Endothelial cell of umbilical vein (primary cell): ENCODE measurements at regions of chr16 and their contacts with region 1.

Region 1: GRCh38 chr16:67672739-67673662 is 6.4 kb downstream of the C16orf86 start:
- DNase-seq: peak; percentile 79
- H3K4me3 ChIP-seq: no peak overlapping the region
- H3K27ac ChIP-seq: peak overlapping the region; percentile 73
- H3K4me1 ChIP-seq: peaks cover 26% of the 10 kb centered on the region
- H3K27me3 ChIP-seq: no peaks in the 10 kb centered on the region
- CTCF ChIP-seq: peak; percentile 80 to 82
- POLR2A ChIP-seq: peak; percentile 22

Region 2: GRCh38 chr16:67719048-67719777 is 46.2 kb after region 1 on chr16 and contains the start of gene GFOD2:
- CTCF ChIA-PET with region 1: interaction called, 28 read pairs
- POLR2A ChIA-PET with region 1: interaction called, 4 read pairs
- dilution Hi-C with region 1: no loop called
- intact Hi-C with region 1: loop called (anchors 1 kb)
- DNase-seq: peak; percentile 98
- H3K4me3 ChIP-seq: peak within 1 kb of the TSS; percentile 78 to 93 (median 91)
- H3K27ac ChIP-seq: peak within 1 kb of the TSS; percentile 81
- H3K4me1 ChIP-seq: peaks cover 23% of the 10 kb centered on the region
- H3K27me3 ChIP-seq: no peaks in the 10 kb centered on the region
- CTCF ChIP-seq: no peak
- POLR2A ChIP-seq: peak; percentile 97
- total RNA-seq, gene GFOD2: 43.7 and 47.5 TPM in 2 replicates

Region 3: GRCh38 chr16:67841764-67842508 is 168.9 kb after region 1 on chr16 and contains the start of gene THAP11:
- CTCF ChIA-PET with region 1: interaction called, 11 read pairs
- POLR2A ChIA-PET with region 1: no interaction called
- dilution Hi-C with region 1: no loop called
- intact Hi-C with region 1: loop called (anchors 2 kb)
- DNase-seq: peak; percentile 95
- H3K4me3 ChIP-seq: peak within 1 kb of the TSS; percentile 32 to 58 (median 57)
- H3K27ac ChIP-seq: peak within 1 kb of the TSS; percentile 77
- H3K4me1 ChIP-seq: peaks cover 26% of the 10 kb centered on the region
- H3K27me3 ChIP-seq: no peaks in the 10 kb centered on the region
- CTCF ChIP-seq: peak; percentile 82 to 93
- POLR2A ChIP-seq: peak; percentile 44
- total RNA-seq, gene THAP11: 22.6 and 24.0 TPM in 2 replicates

Region 4: DNA sequence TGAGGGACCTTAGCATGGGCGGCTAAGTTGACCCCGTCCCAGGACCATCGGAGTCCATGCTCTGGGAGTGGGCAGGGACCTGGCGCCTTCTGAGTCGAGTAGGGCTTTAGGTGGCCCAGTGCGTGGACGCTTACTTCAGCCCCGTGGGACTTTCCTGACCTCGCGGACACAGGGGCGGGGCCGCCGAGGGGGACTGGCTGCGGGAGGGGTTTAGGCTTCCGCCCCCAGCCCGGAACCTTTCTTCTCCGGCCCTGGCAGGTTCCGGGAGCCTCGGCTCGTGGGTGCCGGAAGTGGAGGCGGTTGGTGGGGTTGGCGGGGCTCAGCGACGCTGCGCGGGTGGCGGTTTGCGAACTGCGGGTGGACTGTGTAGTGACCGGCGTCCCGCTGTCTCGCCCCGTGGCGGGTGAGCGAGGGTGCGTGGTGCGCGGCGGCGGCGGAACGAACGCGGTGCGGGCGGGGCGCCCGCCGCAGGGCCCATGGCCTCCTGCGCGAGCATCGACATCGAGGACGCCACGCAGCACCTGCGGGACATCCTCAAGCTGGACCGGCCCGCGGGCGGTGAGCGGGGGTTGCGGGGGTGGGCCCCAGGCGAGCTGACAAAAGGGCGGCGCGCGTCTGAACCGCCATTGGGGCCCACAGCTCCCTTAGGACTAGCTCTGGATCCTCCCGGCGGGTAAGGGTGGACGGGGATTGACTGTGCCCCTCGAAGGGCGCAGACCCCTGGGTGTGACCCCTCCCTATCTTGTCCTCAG is 200.0 kb after region 1 on chr16 and contains the start of gene EDC4:
- CTCF ChIA-PET with region 1: interaction called, 10 read pairs
- POLR2A ChIA-PET with region 1: no interaction called
- dilution Hi-C with region 1: no loop called
- intact Hi-C with region 1: loop called (anchors 2 kb)
- DNase-seq: peak; percentile 78
- H3K4me3 ChIP-seq: peak within 1 kb of the TSS; percentile 66 to 79 (median 67)
- H3K27ac ChIP-seq: peak within 1 kb of the TSS; percentile 40
- H3K4me1 ChIP-seq: peaks cover 15% of the 10 kb centered on the region
- H3K27me3 ChIP-seq: no peaks in the 10 kb centered on the region
- CTCF ChIP-seq: no peak
- POLR2A ChIP-seq: peak; percentile 91
- total RNA-seq, gene EDC4: 68.0 and 81.2 TPM in 2 replicates

Region 5: DNA sequence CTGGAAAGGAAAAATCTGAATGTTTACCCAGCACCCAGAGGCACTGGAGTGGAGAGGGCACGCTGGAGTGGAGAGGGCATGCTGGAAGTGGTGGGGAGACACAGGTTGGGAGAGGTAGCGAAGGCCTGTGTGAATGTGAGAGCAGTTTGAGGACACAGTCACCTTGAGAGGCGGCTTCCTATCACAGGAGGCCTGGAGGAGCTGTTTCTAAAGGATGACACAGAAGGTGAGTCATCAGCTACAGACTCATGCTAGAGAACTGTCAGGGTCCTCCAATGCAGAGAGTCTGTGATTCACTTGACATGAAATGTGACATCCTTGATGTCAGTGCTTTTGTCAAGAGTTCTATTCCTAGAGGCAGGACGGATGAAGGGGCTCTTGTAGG is 244.8 kb after region 1 on chr16:
- CTCF ChIA-PET with region 1: interaction called, 4 read pairs
- POLR2A ChIA-PET with region 1: no interaction called
- dilution Hi-C with region 1: loop called (anchors 25 kb)
- intact Hi-C with region 1: no loop called
- DNase-seq: no peak
- H3K4me3 ChIP-seq: no peak overlapping the region
- H3K27ac ChIP-seq: no peak overlapping the region
- H3K4me1 ChIP-seq: no peaks in the 10 kb centered on the region
- H3K27me3 ChIP-seq: no peaks in the 10 kb centered on the region
- CTCF ChIP-seq: no peak
- POLR2A ChIP-seq: no peak